Ovary (tissue), 10 donors: ENCODE measurements at regions of chr12 and their contacts with region 1.

Region 1: DNA sequence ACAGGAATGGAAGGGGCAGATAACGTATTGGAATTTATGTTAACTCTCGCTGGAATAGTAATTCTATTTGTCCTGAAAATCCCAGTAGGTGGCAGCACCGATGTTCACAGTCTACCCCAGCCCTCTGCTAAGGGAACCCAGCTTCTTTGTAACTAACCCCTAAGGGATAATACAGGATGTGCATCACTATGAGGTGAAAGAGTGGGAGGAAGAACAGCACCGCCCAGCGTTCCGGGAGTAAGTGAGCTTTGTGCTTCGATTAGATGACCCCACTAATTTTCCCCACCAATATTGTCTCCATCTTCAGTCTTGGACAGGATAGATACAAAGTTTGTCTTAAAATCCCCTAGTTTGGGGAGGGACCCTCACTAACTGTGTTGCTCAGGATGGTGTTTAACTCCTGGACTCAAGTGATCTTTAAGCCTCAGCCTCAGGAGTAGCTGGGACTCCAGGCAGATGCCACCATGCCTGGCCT is 2.7 kb downstream of the SLC2A3 start:
- DNase-seq: peak; percentile 67 to 83 (median 77)
- H3K4me3 ChIP-seq: no peak overlapping the region
- H3K27ac ChIP-seq: peak overlapping the region in 1 of 2 donors; percentile 49
- H3K4me1 ChIP-seq: peaks cover 1% of the 10 kb centered on the region
- H3K27me3 ChIP-seq: no peaks in the 10 kb centered on the region
- CTCF ChIP-seq: peak; percentile 45 to 79 (median 75)
- EP300 ChIP-seq: no peak
- POLR2A ChIP-seq: no peak

Region 2: GRCh38 chr12:7869127-7869526 is 64.2 kb before region 1 on chr12:
- intact Hi-C with region 1: loop called in 1 of 4 experiments (anchors 10 kb)
- DNase-seq: no peak
- H3K4me3 ChIP-seq: no peak overlapping the region
- H3K27ac ChIP-seq: no peak overlapping the region
- H3K4me1 ChIP-seq: peaks cover 4% of the 10 kb centered on the region
- H3K27me3 ChIP-seq: no peaks in the 10 kb centered on the region
- CTCF ChIP-seq: no peak
- EP300 ChIP-seq: no peak
- POLR2A ChIP-seq: no peak

Region 3: DNA sequence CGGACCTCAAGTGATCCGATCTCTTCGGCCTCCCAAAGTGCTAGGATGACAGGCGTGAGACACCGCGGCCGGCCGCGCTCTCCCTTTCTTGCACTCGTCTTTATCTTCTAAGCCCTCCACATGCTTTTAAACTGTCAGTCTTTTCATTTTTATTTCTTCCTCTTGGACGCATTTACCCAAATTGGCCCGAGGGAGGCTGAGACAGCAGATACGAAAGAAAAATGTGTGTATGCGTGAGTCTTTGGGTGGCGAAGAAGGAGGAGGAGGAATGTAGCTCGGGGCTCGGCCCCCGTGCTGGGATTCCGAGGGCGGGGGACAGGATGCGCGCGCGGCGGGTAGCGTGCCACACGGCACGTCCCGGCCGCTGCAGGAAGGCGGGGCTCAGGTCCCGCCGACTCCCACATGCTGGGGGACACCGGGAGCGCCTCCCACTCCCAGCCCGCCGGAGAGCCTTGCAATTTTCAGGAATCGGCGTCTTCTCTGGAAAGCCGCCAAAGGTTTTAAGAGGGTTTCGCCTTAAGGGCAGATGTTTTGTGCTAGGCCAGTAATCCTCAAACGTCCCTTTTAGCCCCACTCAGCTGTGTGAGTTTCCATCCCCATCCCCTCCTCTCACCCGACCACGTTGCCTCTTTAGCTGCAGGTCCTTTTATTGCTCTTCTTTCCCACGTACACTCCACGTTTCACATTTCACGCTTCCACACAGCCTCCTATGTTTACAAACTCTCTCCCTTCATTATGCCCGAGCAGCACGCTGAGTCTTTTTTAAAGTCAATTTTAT is 37.4 kb after region 1 on chr12:
- intact Hi-C with region 1: loop called in 1 of 4 experiments (anchors 2 kb)
- DNase-seq: peak; percentile 83 to 93 (median 88)
- H3K4me3 ChIP-seq: peak overlapping the region; percentile 36
- H3K27ac ChIP-seq: peak overlapping the region; percentile 12 to 38
- H3K4me1 ChIP-seq: peaks cover 1% of the 10 kb centered on the region
- H3K27me3 ChIP-seq: no peaks in the 10 kb centered on the region
- CTCF ChIP-seq: no peak
- EP300 ChIP-seq: peak; percentile 68
- POLR2A ChIP-seq: no peak

Region 4: GRCh38 chr12:7995266-7995963 is 62.1 kb after region 1 on chr12:
- intact Hi-C with region 1: loop called in 3 of 4 experiments (anchors 5 to 10 kb)
- DNase-seq: peak; percentile 63 to 83 (median 76)
- H3K4me3 ChIP-seq: no peak overlapping the region
- H3K27ac ChIP-seq: no peak overlapping the region
- H3K4me1 ChIP-seq: no peaks in the 10 kb centered on the region
- H3K27me3 ChIP-seq: no peaks in the 10 kb centered on the region
- CTCF ChIP-seq: peak; percentile 80 to 91 (median 81)
- EP300 ChIP-seq: no peak
- POLR2A ChIP-seq: no peak